Transverse colon (tissue), 4 donors: ENCODE measurements at regions of chr20 and their contacts with region 1.

Region 1: GRCh38 chr20:4519530-4519929 is 202.2 kb upstream of the PRND start:
- DNase-seq: no peak
- H3K4me3 ChIP-seq: no peak overlapping the region
- H3K27ac ChIP-seq: no peak overlapping the region
- H3K4me1 ChIP-seq: no peaks in the 10 kb centered on the region
- H3K27me3 ChIP-seq: no peaks in the 10 kb centered on the region
- CTCF ChIP-seq: peak in 2 of 5 experiments; percentile 12 to 24
- EP300 ChIP-seq: no peak
- POLR2A ChIP-seq: no peak

Region 2: DNA sequence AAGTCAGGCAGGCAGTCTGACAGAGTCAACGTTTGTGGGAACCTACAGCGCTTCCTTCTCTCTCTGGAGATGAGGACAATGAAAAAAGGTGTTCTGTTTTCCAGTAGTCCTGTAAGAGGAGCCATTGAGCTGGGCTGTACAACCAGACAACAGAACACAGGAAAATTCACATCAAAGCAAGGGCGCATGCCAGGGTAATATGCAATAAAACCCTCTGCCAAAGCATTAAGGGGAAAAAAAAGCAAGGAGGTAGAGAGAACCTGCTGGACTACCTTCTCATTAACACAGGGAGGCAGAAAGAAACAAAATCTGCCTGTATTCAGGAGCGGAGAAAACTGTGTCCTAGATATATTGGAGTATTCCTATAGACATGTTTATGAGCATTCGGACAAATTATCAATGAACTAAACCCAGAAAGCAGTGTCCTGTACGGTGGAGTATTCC is 505.5 kb before region 1 on chr20:
- in situ Hi-C with region 1: no loop called
- intact Hi-C with region 1: no loop called
- DNase-seq: peak; percentile 68
- H3K4me3 ChIP-seq: peak overlapping the region in 2 of 4 donors; percentile 80 to 93
- H3K27ac ChIP-seq: peak overlapping the region; percentile 82 to 89 (median 88)
- H3K4me1 ChIP-seq: peaks cover 0 to 41% (median 19%) of the 10 kb centered on the region in 4 donors
- H3K27me3 ChIP-seq: no peaks in the 10 kb centered on the region
- CTCF ChIP-seq: peak; percentile 47 to 74 (median 54)
- EP300 ChIP-seq: no peak
- POLR2A ChIP-seq: no peak

Region 3: DNA sequence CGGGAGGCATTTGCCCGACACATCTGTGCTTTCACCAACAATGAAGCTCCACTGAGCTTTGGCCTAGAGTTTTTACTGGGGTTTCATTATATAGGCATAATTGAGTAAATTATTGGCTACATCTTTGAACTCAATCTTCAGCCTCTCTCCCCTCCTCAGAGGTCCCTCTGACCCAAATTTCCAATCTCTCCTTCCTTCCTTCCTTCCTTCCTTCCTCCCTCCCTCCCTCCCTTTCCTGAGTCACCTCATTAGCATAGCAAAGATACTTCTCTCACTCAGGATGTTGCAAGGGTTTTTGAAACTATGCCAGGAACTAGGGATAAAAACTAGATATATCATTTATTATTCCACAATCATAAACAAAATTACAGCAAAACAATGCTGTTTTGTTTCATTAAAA is 36.0 kb before region 1 on chr20:
- in situ Hi-C with region 1: loop called in 1 of 4 experiments (anchors 5 kb)
- intact Hi-C with region 1: no loop called
- DNase-seq: no peak
- H3K4me3 ChIP-seq: no peak overlapping the region
- H3K27ac ChIP-seq: no peak overlapping the region
- H3K4me1 ChIP-seq: no peaks in the 10 kb centered on the region
- H3K27me3 ChIP-seq: no peaks in the 10 kb centered on the region
- CTCF ChIP-seq: no peak
- EP300 ChIP-seq: no peak
- POLR2A ChIP-seq: no peak

Region 4: GRCh38 chr20:5416086-5416485 is 896.6 kb after region 1 on chr20:
- in situ Hi-C with region 1: no loop called
- intact Hi-C with region 1: loop called (anchors 5 kb)
- DNase-seq: no peak
- H3K4me3 ChIP-seq: no peak overlapping the region
- H3K27ac ChIP-seq: no peak overlapping the region
- H3K4me1 ChIP-seq: no peaks in the 10 kb centered on the region
- H3K27me3 ChIP-seq: no peaks in the 10 kb centered on the region
- CTCF ChIP-seq: no peak
- EP300 ChIP-seq: no peak
- POLR2A ChIP-seq: no peak